ENCODE measurements at regions of chr3 and their contacts with region 1.

Region 1: GRCh38 chr3:15051531-15051930 is 13.6 kb downstream of the MRPS25 start:
- DNase-seq: peak; percentile 64
- H3K4me3 Mint-ChIP-seq: no peak overlapping the region
- H3K27ac Mint-ChIP-seq: peak overlapping the region; percentile 65
- H3K4me1 Mint-ChIP-seq: peaks cover 36% of the 10 kb centered on the region
- H3K27me3 Mint-ChIP-seq: no peaks in the 10 kb centered on the region

Region 2: GRCh38 chr3:15098503-15099363 is 47.2 kb after region 1 on chr3 and contains the start of gene RBSN:
- CTCF ChIA-PET with region 1: no interaction called
- intact Hi-C with region 1: loop called (anchors 5 kb)
- DNase-seq: peak; percentile 97
- H3K4me3 Mint-ChIP-seq: peak within 1 kb of the TSS; percentile 90
- H3K27ac Mint-ChIP-seq: peak within 1 kb of the TSS; percentile 83
- H3K4me1 Mint-ChIP-seq: peaks cover 10% of the 10 kb centered on the region
- H3K27me3 Mint-ChIP-seq: no peaks in the 10 kb centered on the region
- total RNA-seq, gene RBSN: 15.3 to 15.8 TPM